Esophagus squamous epithelium (tissue), 5 donors: ENCODE measurements at regions of chr20 and their contacts with region 1.

Region 1: DNA sequence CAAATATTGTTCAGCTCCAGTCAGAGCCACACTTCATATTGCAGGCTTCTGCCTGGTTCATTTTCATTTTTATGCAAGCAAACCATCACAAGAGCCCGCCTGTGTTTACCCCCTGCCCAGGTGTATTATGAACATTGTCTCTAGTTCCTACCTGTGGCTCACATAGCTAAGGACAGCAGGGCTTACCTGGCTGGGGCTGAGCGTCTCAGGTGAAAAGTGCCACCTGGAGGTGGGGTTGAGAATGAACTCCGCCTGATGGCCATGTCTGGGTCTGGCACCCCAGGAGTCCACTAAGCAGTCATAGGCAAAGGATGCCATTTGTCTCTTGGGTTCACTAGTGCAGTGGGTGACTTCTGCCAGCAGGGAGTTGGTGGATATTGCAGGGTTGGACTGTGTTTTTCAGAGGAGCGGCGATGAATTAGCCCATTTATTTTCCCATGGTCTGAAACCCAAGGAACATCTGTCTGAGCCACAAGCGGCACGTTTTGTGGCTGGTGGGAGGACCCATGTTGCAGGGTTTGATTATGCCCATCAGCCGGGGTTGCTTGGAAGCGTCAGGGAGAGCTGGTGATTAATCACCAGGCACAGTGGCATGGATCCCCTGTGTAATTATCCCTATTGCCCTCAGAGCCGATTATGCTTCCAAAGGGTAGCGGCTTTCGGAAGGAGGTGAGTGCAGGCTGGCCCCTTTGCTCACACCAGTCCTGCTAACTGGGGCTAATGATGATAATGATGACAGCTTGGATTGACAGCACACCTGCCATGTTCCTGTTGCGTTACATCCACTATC is 92.1 kb downstream of the CDH26 start:
- DNase-seq: no peak
- H3K4me3 ChIP-seq: no peak overlapping the region
- H3K27ac ChIP-seq: peak overlapping the region in 1 of 4 donors; percentile 61
- H3K4me1 ChIP-seq: peaks cover 0 to 25% (median 3%) of the 10 kb centered on the region in 3 donors
- H3K27me3 ChIP-seq: peaks cover 0 to 41% (median 0%) of the 10 kb centered on the region in 4 donors
- CTCF ChIP-seq: peak in 5 of 6 experiments; percentile 35 to 79 (median 47)
- POLR2A ChIP-seq: no peak

Region 2: GRCh38 chr20:59954718-59955117 is 95.6 kb before region 1 on chr20:
- intact Hi-C with region 1: loop called (anchors 5 kb)
- DNase-seq: no peak
- H3K4me3 ChIP-seq: no peak overlapping the region
- H3K27ac ChIP-seq: no peak overlapping the region
- H3K4me1 ChIP-seq: no peaks in the 10 kb centered on the region
- H3K27me3 ChIP-seq: no peaks in the 10 kb centered on the region
- CTCF ChIP-seq: no peak
- POLR2A ChIP-seq: no peak